Gastrocnemius medialis (tissue), 4 donors: ENCODE measurements at regions of chr4 and their contacts with region 1.

Region 1: DNA sequence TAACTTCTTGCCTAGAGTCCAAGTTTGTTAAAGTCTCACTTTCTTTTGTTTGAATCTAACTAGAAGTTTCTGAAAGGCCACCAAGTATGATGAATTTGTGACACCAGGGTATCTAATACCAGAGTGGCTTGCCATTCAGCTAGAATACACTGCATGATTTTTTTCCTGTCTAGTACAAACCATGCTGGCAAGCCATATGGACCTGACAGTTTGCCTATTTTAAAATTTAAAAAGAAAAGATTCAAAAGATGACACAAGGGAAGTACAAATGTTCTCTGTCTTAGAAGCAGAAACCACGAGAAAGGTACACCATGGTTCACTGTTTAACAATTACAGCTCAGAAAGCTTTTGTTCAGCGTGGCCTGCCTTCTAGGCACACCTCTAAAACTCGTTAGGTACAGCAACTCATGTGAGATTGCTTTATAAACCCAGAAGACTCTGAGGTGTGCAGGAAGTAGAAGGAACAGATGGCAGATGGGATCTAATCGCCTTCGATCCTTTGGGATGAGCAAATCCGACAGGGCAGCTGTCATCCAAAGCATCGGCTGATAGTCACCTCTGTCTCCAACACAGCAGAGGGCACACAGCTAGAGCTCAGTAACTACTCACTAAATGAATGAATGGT is 35.4 kb upstream of the CENPU start:
- DNase-seq: no peak
- ATAC-seq: no peak
- H3K4me3 ChIP-seq: no peak overlapping the region
- H3K27ac ChIP-seq: peak overlapping the region in 3 of 4 donors; percentile 33 to 83 (median 48)
- H3K4me1 ChIP-seq: peaks cover 23 to 38% of the 10 kb centered on the region in 2 donors
- H3K27me3 ChIP-seq: no peaks in the 10 kb centered on the region
- CTCF ChIP-seq: no peak
- POLR2A ChIP-seq: no peak

Region 2: DNA sequence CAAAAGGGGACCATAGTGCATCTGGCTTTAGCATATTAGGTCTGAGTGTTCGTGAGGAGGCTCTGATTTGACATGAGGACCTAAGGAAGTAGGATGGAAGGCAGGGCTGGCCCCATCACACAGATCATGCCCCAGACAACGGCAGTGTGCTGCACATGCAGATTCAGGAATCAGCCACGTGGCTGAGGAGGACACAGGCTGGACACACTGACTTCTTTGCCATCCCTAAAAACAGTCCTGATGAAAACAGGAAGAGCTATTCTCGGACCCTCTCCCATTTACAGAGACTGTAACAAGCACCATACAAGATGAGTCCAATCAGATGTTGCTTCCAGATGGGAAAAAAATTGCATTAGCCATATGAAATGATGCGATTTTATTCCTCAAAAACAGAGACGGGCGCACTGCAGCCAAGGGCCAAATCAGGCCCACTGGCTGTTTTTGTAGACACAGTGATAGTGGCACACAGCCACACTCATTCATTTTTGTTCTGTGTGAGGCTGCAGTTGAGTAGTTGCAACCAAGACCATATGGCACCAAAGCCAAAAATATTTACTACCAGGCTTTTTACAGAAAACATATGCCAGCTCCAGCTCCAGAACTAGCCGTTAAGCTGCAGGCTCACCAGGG is 15.5 kb after region 1 on chr4:
- in situ Hi-C with region 1: no loop called
- intact Hi-C with region 1: loop called (anchors 2 kb)
- DNase-seq: no peak
- ATAC-seq: no peak
- H3K4me3 ChIP-seq: no peak overlapping the region
- H3K27ac ChIP-seq: peak overlapping the region; percentile 7 to 100 (median 80)
- H3K4me1 ChIP-seq: peaks cover 9 to 11% of the 10 kb centered on the region in 2 donors
- H3K27me3 ChIP-seq: no peaks in the 10 kb centered on the region
- CTCF ChIP-seq: no peak
- POLR2A ChIP-seq: no peak